BJ (cell line): ENCODE measurements at regions of chr14 and their contacts with region 1.

Region 1: DNA sequence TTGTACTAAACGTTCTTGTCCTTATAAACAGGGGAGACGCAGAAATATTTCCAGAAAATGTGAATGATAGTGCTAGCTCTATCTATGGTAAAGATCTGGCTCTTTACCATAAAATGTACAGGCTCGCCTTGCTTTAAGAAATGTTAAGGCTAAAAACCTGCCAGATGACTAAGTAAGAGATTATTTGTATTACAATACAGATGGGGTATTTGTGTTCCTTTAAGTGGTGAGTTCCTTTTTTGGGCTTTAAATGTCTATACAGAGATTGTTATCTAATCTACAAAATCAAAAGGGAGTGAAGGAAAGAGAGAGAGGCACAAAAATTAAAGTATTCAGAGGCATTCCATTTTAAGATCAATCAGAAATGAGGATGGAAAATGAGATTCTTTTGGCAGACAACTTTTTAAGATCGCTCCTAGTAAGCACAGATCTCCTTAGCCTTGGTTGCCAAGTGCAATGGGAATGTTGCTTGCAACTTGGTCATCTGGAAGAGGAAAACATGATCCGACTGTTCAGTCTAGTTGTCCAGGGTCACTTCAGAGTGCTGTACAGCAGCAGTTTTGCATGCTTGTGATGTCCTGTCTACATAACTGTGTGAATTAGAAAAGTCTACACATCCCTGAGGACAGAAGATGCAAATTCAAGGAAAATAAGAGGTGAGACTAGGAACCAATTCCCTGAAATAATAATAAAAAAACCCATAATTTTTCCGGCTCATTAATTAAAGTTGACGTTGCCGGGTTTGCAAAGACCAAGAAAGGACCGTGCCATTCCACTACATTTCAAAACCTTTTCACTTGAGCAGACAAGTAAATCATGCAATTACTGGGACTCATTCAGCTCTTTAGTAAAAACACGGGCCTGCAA is 380.8 kb downstream of the EGLN3 start:
- DNase-seq: no peak
- H3K4me3 ChIP-seq: no peak overlapping the region
- H3K27me3 ChIP-seq: no peaks in the 10 kb centered on the region
- CTCF ChIP-seq: no peak

Region 2: GRCh38 chr14:33529787-33530757 is 40.0 kb before region 1 on chr14:
- CTCF ChIA-PET with region 1: no interaction called
- POLR2A ChIA-PET with region 1: no interaction called
- DNase-seq: no peak
- H3K4me3 ChIP-seq: no peak overlapping the region
- H3K27me3 ChIP-seq: no peaks in the 10 kb centered on the region
- CTCF ChIP-seq: no peak

Region 3: GRCh38 chr14:33764876-33765650 is 195.0 kb after region 1 on chr14:
- CTCF ChIA-PET with region 1: no interaction called
- POLR2A ChIA-PET with region 1: interaction called, 12 read pairs
- DNase-seq: no peak
- H3K4me3 ChIP-seq: no peak overlapping the region
- H3K27me3 ChIP-seq: peaks cover 2% of the 10 kb centered on the region; the same call in 1 of the 2 replicates
- CTCF ChIP-seq: no peak